Heart left ventricle (tissue), 16 donors: ENCODE measurements at regions of chr6 and their contacts with region 1.

Region 1: DNA sequence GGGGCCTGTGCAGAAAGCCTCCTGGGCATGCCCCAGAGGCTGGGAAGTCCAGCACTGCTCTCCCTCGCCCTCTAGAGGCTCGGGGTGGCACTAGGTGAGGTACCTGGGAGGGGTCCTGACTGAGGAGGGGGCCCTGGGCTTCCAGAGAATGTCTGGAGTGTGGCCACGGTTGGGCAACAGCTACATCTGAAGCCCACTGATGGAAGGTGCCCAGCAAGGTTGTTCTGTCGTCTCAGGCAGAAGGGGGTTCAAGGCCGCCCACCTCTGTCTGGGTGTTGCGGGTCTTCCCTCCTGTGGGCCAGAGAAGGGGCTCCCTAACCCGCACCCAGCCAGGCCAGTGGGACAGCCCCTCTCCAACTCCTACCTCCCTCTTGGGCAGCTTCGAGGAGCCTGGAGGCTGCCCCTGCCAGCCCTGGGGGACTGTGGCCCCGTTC is 11.4 kb upstream of the VEGFA start:
- DNase-seq: no peak
- ATAC-seq: peak in 3 of 4 donors; percentile 58 to 70 (median 70)
- H3K4me3 ChIP-seq: no peak overlapping the region
- H3K27ac ChIP-seq: no peak overlapping the region
- H3K4me1 ChIP-seq: peaks cover 0 to 6% (median 0%) of the 10 kb centered on the region in 12 donors
- H3K27me3 ChIP-seq: no peaks in the 10 kb centered on the region
- CTCF ChIP-seq: peak; percentile 57 to 83 (median 66)
- POLR2A ChIP-seq: no peak

Region 2: DNA sequence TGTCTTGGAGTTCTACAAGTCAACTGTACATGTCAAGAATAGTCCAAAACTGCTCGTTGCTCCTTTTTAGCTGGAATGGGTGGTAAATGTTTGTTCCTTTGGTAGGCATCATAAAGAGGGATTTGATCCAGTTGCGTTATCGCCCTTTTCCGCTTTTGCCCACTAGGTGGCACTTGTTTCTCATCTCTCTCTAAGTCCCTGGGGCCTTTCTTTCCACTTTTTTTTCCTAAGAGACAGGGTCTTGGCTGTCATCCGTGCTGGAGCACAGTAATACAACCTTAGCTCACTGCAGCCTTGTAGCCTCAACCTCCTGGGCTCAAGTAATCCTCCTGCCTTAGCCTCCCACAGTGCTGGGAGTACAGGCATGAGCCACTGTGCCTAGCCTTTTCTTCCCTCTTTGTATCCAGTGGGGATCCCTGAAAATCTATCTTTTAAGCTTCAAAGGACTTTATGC is 150.3 kb before region 1 on chr6:
- intact Hi-C with region 1: loop called in 1 of 10 experiments (anchors 10 kb)
- DNase-seq: peak in 3 of 5 donors; percentile 40 to 66 (median 63)
- ATAC-seq: peak; percentile 51 to 56 (median 54)
- H3K4me3 ChIP-seq: no peak overlapping the region
- H3K27ac ChIP-seq: no peak overlapping the region
- H3K4me1 ChIP-seq: peaks cover 0 to 13% (median 0%) of the 10 kb centered on the region in 12 donors
- H3K27me3 ChIP-seq: no peaks in the 10 kb centered on the region
- CTCF ChIP-seq: peak; percentile 66 to 90 (median 78)
- POLR2A ChIP-seq: no peak

Region 3: DNA sequence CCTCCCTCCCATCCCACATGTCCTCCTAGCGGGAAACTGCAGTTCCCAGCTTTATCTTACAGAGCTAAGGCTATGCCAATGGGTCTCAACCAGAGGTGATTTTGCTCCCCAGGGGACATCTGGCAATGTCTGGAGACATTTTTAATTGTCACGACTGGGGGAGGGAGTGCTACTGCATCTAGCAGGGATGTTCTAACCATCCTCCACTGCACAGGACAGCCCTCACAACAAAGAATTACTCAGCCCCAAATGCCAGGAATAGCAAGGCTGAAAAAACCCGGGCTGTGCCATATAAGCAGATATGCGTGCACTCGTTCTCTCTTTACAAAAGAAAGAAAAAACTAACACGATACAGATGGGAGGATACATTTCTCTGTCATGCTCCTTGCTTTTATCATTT is 79.6 kb before region 1 on chr6:
- intact Hi-C with region 1: loop called in 1 of 10 experiments (anchors 5 kb)
- DNase-seq: no peak
- ATAC-seq: no peak
- H3K4me3 ChIP-seq: no peak overlapping the region
- H3K27ac ChIP-seq: no peak overlapping the region
- H3K4me1 ChIP-seq: peaks cover 0 to 57% (median 20%) of the 10 kb centered on the region in 12 donors
- H3K27me3 ChIP-seq: no peaks in the 10 kb centered on the region
- CTCF ChIP-seq: no peak
- POLR2A ChIP-seq: no peak

Region 4: DNA sequence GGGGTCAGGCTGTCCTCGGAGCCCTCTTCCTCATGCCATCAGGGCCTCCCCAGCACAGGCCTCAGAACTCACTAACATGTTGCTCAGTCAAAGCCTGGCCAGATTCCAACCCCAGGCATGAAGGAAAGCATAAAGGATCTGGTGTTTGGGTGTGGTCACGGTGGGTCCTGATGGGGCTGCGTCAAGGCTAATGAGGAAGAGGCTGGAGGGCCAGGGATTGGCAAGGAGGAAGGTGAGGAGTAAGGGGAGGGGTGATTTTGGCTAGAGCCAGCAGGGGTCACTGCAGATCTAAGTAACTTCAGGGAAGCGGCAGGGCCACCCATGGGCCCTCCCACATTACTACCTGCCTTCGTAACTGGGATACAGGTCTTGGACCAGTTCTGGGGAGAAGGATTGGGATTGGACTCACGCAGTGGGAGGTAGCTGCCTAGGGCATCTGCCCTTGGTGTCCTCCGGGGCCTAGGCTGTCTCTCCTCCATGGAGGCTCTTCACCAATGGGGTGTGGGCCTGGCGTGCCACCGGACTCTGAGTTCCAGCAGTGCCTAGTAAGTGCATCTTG is 34.8 kb before region 1 on chr6:
- intact Hi-C with region 1: loop called in 3 of 10 experiments (anchors 5 kb)
- DNase-seq: peak; percentile 60 to 72 (median 66)
- ATAC-seq: peak; percentile 66 to 88 (median 81)
- H3K4me3 ChIP-seq: no peak overlapping the region
- H3K27ac ChIP-seq: no peak overlapping the region
- H3K4me1 ChIP-seq: peaks cover 3 to 21% (median 6%) of the 10 kb centered on the region in 12 donors
- H3K27me3 ChIP-seq: no peaks in the 10 kb centered on the region
- CTCF ChIP-seq: peak; percentile 46 to 72 (median 58)
- POLR2A ChIP-seq: no peak